Caco-2 (cell line): ENCODE measurements at regions of chr11 and their contacts with region 1.

Region 1: GRCh38 chr11:108497317-108498045 is 703 bp downstream of the POGLUT3 start:
- DNase-seq: peak; percentile 92 to 96
- H3K4me3 ChIP-seq: peak overlapping the region; percentile 74
- H3K4me3 Mint-ChIP-seq: peak overlapping the region; percentile 92
- H3K27ac Mint-ChIP-seq: peak overlapping the region; percentile 98
- H3K4me1 ChIP-seq: peaks cover 37% of the 10 kb centered on the region
- H3K4me1 Mint-ChIP-seq: peaks cover 43% of the 10 kb centered on the region
- H3K27me3 ChIP-seq: no peaks in the 10 kb centered on the region
- H3K27me3 Mint-ChIP-seq: no peaks in the 10 kb centered on the region
- CTCF ChIP-seq: no peak

Region 2: GRCh38 chr11:108121274-108122155 is 376.0 kb before region 1 on chr11 and contains the start of gene ACAT1:
- CTCF ChIA-PET with region 1: no interaction called
- POLR2A ChIA-PET with region 1: no interaction called
- intact Hi-C with region 1: loop called (anchors 5 kb)
- DNase-seq: peak; percentile 98 to 100
- H3K4me3 ChIP-seq: peak within 1 kb of the TSS; percentile 88
- H3K4me3 Mint-ChIP-seq: peak within 1 kb of the TSS; percentile 81
- H3K27ac Mint-ChIP-seq: peak within 1 kb of the TSS; percentile 66
- H3K4me1 ChIP-seq: peaks cover 13% of the 10 kb centered on the region
- H3K4me1 Mint-ChIP-seq: peaks cover 27% of the 10 kb centered on the region
- H3K27me3 ChIP-seq: no peaks in the 10 kb centered on the region
- H3K27me3 Mint-ChIP-seq: no peaks in the 10 kb centered on the region
- CTCF ChIP-seq: peak; percentile 54 to 67
- total RNA-seq, gene ACAT1: 131 and 134 TPM in 2 replicates

Region 3: GRCh38 chr11:108319541-108320145 is 177.8 kb before region 1 on chr11:
- CTCF ChIA-PET with region 1: no interaction called
- POLR2A ChIA-PET with region 1: no interaction called
- intact Hi-C with region 1: loop called (anchors 5 kb)
- DNase-seq: no peak
- H3K4me3 ChIP-seq: no peak overlapping the region
- H3K4me3 Mint-ChIP-seq: no peak overlapping the region
- H3K27ac Mint-ChIP-seq: no peak overlapping the region
- H3K4me1 ChIP-seq: peaks cover 10% of the 10 kb centered on the region
- H3K4me1 Mint-ChIP-seq: peaks cover 9% of the 10 kb centered on the region
- H3K27me3 ChIP-seq: no peaks in the 10 kb centered on the region
- H3K27me3 Mint-ChIP-seq: no peaks in the 10 kb centered on the region
- CTCF ChIP-seq: no peak

Region 4: DNA sequence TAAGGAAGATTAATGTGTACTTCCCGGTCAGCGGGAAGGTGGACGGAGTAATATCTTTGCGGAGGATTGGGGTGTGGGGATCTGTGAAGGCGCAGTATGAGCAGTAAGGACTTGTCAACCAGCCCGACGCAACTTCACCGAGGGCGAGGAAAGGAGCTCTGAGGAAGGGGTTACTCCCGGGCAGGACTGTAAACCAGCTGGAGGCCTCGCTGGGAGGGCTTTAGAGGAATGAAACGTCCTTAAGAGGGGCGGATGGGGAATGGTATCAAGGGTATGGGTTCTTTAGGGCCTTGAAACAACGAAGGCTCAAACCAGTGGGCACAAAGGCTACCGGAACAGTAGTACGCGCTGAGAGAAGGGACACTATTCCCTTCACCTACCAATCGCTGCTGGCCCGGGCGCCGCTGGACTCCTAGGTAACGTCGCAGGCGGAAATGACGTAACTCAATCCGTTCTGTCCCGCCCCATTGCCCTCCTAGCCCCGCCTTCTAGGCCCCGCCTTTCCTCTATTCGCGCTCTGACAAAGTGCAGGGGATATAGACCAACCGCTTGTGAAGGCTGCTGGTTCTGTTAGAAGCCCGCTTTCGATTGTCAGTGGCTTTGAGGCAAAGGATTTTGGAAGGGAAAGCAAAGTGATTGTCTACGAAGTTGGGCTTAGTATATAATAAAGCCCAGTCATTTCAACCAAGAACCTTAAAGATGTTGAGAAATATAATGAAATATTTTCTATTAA is 30.2 kb before region 1 on chr11 and contains the start of gene C11orf65:
- CTCF ChIA-PET with region 1: no interaction called
- POLR2A ChIA-PET with region 1: no interaction called
- intact Hi-C with region 1: loop called (anchors 1 kb)
- DNase-seq: peak; percentile 99
- H3K4me3 ChIP-seq: peak within 1 kb of the TSS; percentile 68
- H3K4me3 Mint-ChIP-seq: peak within 1 kb of the TSS; percentile 97
- H3K27ac Mint-ChIP-seq: peak within 1 kb of the TSS; percentile 100
- H3K4me1 ChIP-seq: peaks cover 9% of the 10 kb centered on the region
- H3K4me1 Mint-ChIP-seq: peaks cover 17% of the 10 kb centered on the region
- H3K27me3 ChIP-seq: no peaks in the 10 kb centered on the region
- H3K27me3 Mint-ChIP-seq: no peaks in the 10 kb centered on the region
- CTCF ChIP-seq: no peak
- total RNA-seq, gene C11orf65: 0.86 and 1.0 TPM in 2 replicates

Region 5: DNA sequence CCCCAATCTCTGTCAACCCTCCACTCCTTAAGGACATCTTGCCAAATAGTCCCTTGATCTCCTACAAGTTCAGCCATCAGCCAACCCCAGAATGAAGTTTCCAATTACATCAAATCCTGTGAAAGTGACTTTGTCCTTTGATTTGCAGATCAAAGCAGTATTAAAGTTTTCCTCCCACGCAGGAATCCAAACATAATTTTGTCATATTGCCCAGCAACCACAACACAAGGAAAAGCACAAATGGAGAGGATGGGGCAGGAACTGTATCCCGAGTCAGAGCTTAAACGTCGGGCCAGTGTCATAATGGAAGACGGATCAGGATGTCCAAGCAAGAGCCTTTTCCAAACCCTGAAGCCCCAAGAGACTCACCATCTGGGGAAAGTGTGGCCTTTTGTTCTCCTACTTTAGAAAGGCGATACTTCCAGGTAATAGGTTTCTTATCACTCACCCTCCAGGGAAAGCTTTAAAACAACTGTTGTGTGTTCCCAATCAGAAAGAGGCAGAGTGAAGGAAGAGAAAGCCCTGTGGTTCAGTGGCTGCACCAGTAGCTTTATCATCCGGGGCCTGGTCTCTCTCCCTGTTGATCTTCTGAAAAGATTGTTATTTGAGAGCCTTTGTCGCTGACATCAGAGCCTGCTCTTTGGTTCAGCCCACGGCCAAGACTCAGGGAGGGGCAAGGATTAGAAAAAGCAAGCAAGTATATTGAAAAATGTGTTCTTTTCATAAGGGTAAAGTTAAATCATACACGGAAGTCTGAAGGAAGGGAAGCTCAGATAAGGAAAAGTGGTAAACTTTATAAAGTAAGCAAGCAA is 54.4 kb after region 1 on chr11:
- CTCF ChIA-PET with region 1: no interaction called
- POLR2A ChIA-PET with region 1: no interaction called
- intact Hi-C with region 1: loop called (anchors 1 kb)
- DNase-seq: peak in 1 of 2 experiments; percentile 39
- H3K4me3 ChIP-seq: no peak overlapping the region
- H3K4me3 Mint-ChIP-seq: peak overlapping the region; percentile 38
- H3K27ac Mint-ChIP-seq: peak overlapping the region; percentile 40
- H3K4me1 ChIP-seq: peaks cover 51% of the 10 kb centered on the region
- H3K4me1 Mint-ChIP-seq: peaks cover 35% of the 10 kb centered on the region
- H3K27me3 ChIP-seq: no peaks in the 10 kb centered on the region
- H3K27me3 Mint-ChIP-seq: no peaks in the 10 kb centered on the region
- CTCF ChIP-seq: no peak

Region 6: GRCh38 chr11:108593214-108593922 is 95.9 kb after region 1 on chr11 and contains the start of gene EXPH5:
- CTCF ChIA-PET with region 1: no interaction called
- POLR2A ChIA-PET with region 1: interaction called, 4 read pairs
- intact Hi-C with region 1: loop called (anchors 1 kb)
- DNase-seq: peak; percentile 100
- H3K4me3 ChIP-seq: peak within 1 kb of the TSS; percentile 89
- H3K4me3 Mint-ChIP-seq: peak within 1 kb of the TSS; percentile 100
- H3K27ac Mint-ChIP-seq: peak within 1 kb of the TSS; percentile 100
- H3K4me1 ChIP-seq: peaks cover 18% of the 10 kb centered on the region
- H3K4me1 Mint-ChIP-seq: peaks cover 33% of the 10 kb centered on the region
- H3K27me3 ChIP-seq: no peaks in the 10 kb centered on the region; the same call in 1 of the 2 replicates
- H3K27me3 Mint-ChIP-seq: no peaks in the 10 kb centered on the region
- CTCF ChIP-seq: no peak
- total RNA-seq, gene EXPH5: 15.3 and 18.1 TPM in 2 replicates